B cell (primary cell): ENCODE measurements at regions of chr5 and their contacts with region 1.

Region 1: DNA sequence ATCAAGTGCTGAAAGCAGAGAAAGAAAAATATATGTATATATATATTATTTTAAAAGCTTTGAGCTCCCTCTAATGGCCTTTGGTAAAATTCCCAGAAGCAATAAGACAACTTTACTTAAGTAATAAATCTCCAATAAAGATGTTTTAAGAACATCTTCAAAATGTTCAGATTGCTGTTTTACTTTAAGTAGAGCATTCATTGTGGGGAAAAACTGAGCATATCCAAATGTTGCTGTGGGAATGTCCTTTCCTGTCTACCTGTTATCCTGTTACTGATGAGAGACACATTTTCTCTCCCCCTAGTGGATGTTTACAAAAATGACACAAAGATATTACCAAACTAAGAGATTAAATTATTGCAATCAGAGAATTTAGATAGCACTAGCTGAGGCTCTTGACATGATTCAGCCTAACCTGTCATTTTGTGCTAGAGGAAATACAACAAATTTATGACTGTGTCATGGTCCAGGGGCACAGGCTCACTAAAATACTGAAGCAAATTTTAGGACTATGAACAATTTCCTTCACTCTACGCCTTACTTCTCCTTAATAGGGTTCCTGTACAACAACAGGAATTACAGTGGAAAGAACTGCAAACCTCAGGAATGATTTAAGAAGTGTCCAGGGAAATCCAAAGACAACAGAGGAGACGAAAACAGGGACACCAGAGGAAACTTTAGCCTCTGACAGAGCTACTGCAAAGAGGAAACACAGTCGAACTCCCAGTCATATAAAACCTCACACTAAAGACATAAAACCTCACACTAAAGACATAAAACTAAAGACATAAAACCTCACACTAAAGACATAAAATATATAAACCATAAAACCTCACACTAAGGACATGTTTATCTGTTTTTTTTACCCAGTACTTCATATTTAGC is 24.3 kb upstream of the PRRC1 start:
- DNase-seq: peak; percentile 68
- ATAC-seq: peak; percentile 45
- H3K4me3 ChIP-seq: no peak overlapping the region
- H3K4me3 Mint-ChIP-seq: no peak overlapping the region
- H3K27ac ChIP-seq: no peak overlapping the region
- H3K27ac Mint-ChIP-seq: no peak overlapping the region
- H3K4me1 ChIP-seq: no peaks in the 10 kb centered on the region
- H3K4me1 Mint-ChIP-seq: no peaks in the 10 kb centered on the region
- H3K27me3 ChIP-seq: peaks cover 0 to 6% (median 2%) of the 10 kb centered on the region in 4 experiments
- H3K27me3 Mint-ChIP-seq: peaks cover 23% of the 10 kb centered on the region
- CTCF ChIP-seq: peak; percentile 100

Region 2: DNA sequence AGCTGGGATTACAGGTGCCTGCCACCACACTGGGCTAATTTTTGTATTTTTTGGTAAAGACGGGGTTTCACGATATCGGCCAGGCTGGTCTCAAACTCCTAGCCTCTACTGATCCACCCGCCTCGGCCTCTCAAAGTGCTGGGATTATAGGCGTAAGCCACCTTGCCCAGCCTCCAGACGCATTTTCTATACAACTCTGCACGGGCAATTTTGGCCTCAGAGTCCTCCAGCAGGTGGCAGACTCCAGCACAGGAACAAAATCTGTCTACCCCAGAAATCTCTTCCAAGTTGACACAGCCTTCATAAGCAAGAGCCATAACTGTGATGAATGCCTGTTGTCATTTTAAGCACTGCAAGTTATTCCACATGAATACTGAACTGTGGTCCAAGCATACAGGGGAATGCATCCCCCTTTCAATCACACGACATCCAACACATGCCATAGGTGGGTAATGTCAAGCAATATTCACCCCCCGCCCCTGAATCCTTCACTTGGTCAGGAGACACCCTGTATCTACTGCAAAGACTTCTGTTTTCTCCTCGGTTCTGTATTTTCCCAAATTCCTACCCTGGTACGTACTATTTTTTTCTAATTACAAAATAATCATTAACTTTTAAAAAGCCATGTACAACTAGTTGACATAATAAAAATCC is 948.9 kb before region 1 on chr5:
- CTCF ChIA-PET with region 1: no interaction called
- POLR2A ChIA-PET with region 1: no interaction called
- intact Hi-C with region 1: loop called (anchors 2 kb)
- DNase-seq: peak; percentile 30
- ATAC-seq: no peak
- H3K4me3 ChIP-seq: no peak overlapping the region
- H3K4me3 Mint-ChIP-seq: no peak overlapping the region
- H3K27ac ChIP-seq: no peak overlapping the region
- H3K27ac Mint-ChIP-seq: no peak overlapping the region
- H3K4me1 ChIP-seq: no peaks in the 10 kb centered on the region
- H3K4me1 Mint-ChIP-seq: no peaks in the 10 kb centered on the region
- H3K27me3 ChIP-seq: no peaks in the 10 kb centered on the region
- H3K27me3 Mint-ChIP-seq: no peaks in the 10 kb centered on the region
- CTCF ChIP-seq: peak; percentile 47

Region 3: GRCh38 chr5:127564002-127564769 is 71.1 kb after region 1 on chr5:
- CTCF ChIA-PET with region 1: no interaction called
- POLR2A ChIA-PET with region 1: no interaction called
- intact Hi-C with region 1: no loop called
- DNase-seq: peak; percentile 68
- ATAC-seq: peak; percentile 56
- H3K4me3 ChIP-seq: no peak overlapping the region
- H3K4me3 Mint-ChIP-seq: no peak overlapping the region
- H3K27ac ChIP-seq: no peak overlapping the region
- H3K27ac Mint-ChIP-seq: no peak overlapping the region
- H3K4me1 ChIP-seq: no peaks in the 10 kb centered on the region
- H3K4me1 Mint-ChIP-seq: peaks cover 7% of the 10 kb centered on the region
- H3K27me3 ChIP-seq: no peaks in the 10 kb centered on the region
- H3K27me3 Mint-ChIP-seq: peaks cover 7% of the 10 kb centered on the region
- CTCF ChIP-seq: peak; percentile 84